ENCODE measurements at regions of chr11 and their contacts with region 1.

Region 1: DNA sequence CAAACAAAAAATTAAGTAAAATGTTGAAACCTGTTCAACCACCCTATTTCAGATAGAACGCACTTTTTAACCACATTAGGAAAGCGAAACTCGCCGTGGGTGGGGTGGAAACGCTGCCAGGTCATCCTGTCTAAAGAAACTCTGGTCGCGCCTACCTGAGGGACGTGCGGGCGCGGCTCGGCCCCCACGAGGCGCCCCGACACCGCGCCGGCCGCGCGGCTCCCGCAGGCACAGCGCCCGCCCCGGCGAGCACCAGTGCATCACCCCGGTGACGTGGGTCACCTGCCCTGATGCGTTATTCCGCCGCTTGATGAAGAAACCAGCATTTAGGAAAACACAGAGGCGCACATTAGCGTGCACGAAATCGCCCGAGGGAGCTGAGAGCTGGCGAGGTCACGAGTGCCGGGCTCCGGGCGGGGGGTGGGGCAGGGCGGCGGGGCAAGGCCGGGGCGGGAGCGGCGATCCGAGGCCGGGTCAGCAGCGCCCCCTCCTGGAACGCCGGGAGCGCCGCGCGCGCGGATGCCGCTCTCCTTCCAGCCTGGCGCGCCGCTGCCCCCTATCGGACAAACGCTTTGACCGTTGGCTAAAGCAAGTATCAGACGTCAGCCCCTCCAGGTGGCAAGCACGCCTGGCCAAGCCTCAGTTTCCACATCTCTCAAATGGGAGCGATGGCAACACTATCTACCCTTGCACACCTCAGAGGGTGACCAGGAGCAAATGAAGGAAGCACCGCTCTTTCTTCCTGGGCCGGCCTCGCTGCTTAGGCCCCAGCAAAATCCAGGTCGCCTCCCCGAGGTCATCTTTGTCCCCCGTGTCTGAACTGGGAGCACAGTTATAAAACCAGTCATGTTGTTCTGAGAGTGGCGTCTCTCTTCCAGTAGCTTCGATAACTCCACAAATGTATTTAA is 15.7 kb upstream of the SNX32 start:
- DNase-seq: peak; percentile 98
- H3K4me3 ChIP-seq: peak overlapping the region; percentile 4 to 65 (median 52)
- H3K27ac ChIP-seq: peak overlapping the region; percentile 82 to 86 (median 85)
- H3K4me1 ChIP-seq: peaks cover 0 to 50% (median 19%) of the 10 kb centered on the region in 4 donors
- H3K27me3 ChIP-seq: no peaks in the 10 kb centered on the region
- CTCF ChIP-seq: peak; percentile 95 to 100 (median 98)
- EP300 ChIP-seq: no peak
- POLR2A ChIP-seq: no peak

Region 2: DNA sequence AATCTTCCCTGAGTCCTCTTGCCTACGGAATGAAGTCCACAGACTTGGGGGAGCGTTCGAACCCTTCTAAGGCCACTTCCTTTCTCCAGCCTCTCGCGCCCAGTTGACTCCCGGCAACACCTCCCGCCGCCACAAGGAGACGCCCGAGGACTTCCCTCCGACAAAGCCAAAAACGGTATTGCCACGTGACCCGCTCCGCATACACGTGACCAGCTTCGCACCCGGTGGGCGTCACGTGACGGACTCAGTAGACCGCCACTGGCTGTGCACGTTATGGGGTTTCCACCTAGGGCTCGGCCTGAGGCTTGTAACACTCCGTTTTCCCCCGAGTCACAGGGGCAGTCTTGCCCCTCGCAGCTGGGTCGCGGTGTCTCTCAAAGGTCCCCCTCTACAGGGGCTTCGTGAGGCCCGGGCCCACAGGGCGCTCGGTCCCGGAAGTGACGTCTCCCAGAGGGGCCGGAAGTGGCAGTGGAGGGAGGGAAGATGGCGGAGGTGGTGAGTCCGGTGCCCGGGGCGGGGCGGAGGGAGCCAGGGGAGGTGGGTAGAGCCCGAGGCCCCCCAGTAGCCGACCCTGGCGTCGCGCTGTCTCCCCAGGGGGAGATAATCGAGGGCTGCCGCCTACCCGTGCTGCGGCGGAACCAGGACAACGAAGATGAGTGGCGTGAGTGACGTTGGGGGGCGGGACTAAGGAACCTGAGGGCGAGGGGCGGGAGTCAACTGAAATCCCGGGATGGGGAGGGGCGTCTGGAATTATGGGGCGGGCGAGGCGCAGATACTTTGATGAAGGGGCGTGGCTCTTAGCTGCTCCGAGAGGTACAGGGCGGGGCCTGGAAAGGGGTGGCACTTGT is 106.1 kb before region 1 on chr11 and contains the start of gene KAT5:
- in situ Hi-C with region 1: loop called (anchors 10 to 25 kb)
- intact Hi-C with region 1: loop called (anchors 5 kb)
- DNase-seq: peak; percentile 100
- H3K4me3 ChIP-seq: peak within 1 kb of the TSS; percentile 59 to 84 (median 67)
- H3K27ac ChIP-seq: peak within 1 kb of the TSS; percentile 91 to 99 (median 93)
- H3K4me1 ChIP-seq: peaks cover 9 to 26% (median 15%) of the 10 kb centered on the region in 4 donors
- H3K27me3 ChIP-seq: no peaks in the 10 kb centered on the region
- CTCF ChIP-seq: peak; percentile 96 to 100 (median 99)
- EP300 ChIP-seq: peak; percentile 28
- POLR2A ChIP-seq: peak; percentile 92
- total RNA-seq, gene KAT5: 51.6 to 203 (median 74.1) TPM

Region 3: GRCh38 chr11:65779851-65780577 is 38.1 kb before region 1 on chr11:
- in situ Hi-C with region 1: no loop called
- intact Hi-C with region 1: loop called (anchors 5 kb)
- DNase-seq: peak; percentile 90
- H3K4me3 ChIP-seq: peak overlapping the region; percentile 58 to 97 (median 85)
- H3K27ac ChIP-seq: peak overlapping the region; percentile 86 to 96 (median 90)
- H3K4me1 ChIP-seq: peaks cover 14 to 21% (median 19%) of the 10 kb centered on the region in 4 donors
- H3K27me3 ChIP-seq: no peaks in the 10 kb centered on the region
- CTCF ChIP-seq: peak; percentile 97 to 100 (median 99)
- EP300 ChIP-seq: no peak
- POLR2A ChIP-seq: peak; percentile 64

Region 4: GRCh38 chr11:66035653-66036333 is 217.7 kb after region 1 on chr11:
- in situ Hi-C with region 1: no loop called
- intact Hi-C with region 1: no loop called
- DNase-seq: no peak
- H3K4me3 ChIP-seq: no peak overlapping the region
- H3K27ac ChIP-seq: no peak overlapping the region
- H3K4me1 ChIP-seq: no peaks in the 10 kb centered on the region
- H3K27me3 ChIP-seq: no peaks in the 10 kb centered on the region
- CTCF ChIP-seq: no peak
- EP300 ChIP-seq: no peak
- POLR2A ChIP-seq: no peak

Region 5: GRCh38 chr11:66268283-66268951 is 450.3 kb after region 1 on chr11 and contains the start of gene RAB1B:
- in situ Hi-C with region 1: no loop called
- intact Hi-C with region 1: no loop called
- DNase-seq: peak; percentile 100
- H3K4me3 ChIP-seq: peak within 1 kb of the TSS; percentile 62 to 96 (median 90)
- H3K27ac ChIP-seq: peak within 1 kb of the TSS; percentile 92 to 99 (median 97)
- H3K4me1 ChIP-seq: peaks cover 23 to 31% (median 24%) of the 10 kb centered on the region in 4 donors
- H3K27me3 ChIP-seq: no peaks in the 10 kb centered on the region
- CTCF ChIP-seq: no peak
- EP300 ChIP-seq: no peak
- POLR2A ChIP-seq: peak; percentile 66
- total RNA-seq, gene RAB1B: 89.8 to 141 (median 131) TPM

Measured in transverse colon (tissue), 4 donors.